ENCODE measurements at regions of chr11 and their contacts with region 1.

Region 1: GRCh38 chr11:130861902-130862860 is 54.1 kb downstream of the SNX19 start:
- DNase-seq: peak; percentile 92
- H3K4me3 ChIP-seq: no peak overlapping the region
- H3K27ac ChIP-seq: no peak overlapping the region
- H3K4me1 ChIP-seq: peaks cover 0 to 7% (median 2%) of the 10 kb centered on the region in 4 donors
- H3K27me3 ChIP-seq: no peaks in the 10 kb centered on the region
- CTCF ChIP-seq: peak; percentile 99 to 100 (median 100)
- EP300 ChIP-seq: no peak
- POLR2A ChIP-seq: no peak

Region 2: DNA sequence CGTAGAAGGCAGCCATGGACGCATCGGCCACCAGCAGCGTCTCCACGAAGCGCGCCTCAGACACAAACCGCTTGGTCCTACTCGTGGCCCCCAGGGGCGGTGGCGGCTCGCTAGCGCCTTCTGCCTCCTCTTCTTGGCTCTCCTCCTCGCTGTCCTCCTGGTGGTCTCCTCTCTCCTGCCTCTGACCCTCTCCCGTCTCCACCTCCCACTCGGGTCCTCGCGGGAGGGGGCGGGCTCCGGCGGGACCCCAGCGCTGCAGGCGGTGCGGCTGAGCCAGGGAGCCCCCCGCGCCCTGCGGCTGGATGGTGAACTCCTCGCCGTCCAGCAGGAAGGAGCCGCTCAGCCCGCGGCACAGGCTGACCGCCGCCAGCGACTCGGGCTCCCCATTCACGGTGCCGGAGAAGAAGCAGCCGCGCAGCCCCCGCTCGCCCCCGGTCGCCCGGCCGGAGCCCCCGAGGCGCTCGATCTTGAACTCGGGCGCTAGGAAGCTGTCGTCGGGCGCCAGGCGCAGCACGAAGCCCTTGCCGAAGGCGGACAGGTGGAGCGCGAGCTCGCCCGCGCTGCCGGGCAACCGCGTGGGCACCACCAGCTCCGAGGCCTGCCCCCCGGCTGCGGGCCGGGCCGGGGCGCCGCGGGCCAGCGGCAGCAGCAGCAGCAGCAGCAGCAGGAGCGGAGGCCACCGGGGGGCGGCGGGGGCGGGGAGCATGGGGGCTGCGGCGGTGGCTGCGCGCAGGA is 434.4 kb before region 1 on chr11:
- in situ Hi-C with region 1: loop called in 2 of 4 experiments (anchors 5 to 10 kb)
- intact Hi-C with region 1: no loop called
- DNase-seq: peak; percentile 25
- H3K4me3 ChIP-seq: peak overlapping the region; percentile 31 to 57 (median 44)
- H3K27ac ChIP-seq: peak overlapping the region in 3 of 4 donors; percentile 55 to 72 (median 61)
- H3K4me1 ChIP-seq: peaks cover 0 to 16% (median 5%) of the 10 kb centered on the region in 4 donors
- H3K27me3 ChIP-seq: peaks cover 51% of the 10 kb centered on the region
- CTCF ChIP-seq: peak in 3 of 5 experiments; percentile 21 to 41 (median 33)
- EP300 ChIP-seq: no peak
- POLR2A ChIP-seq: no peak

Region 3: DNA sequence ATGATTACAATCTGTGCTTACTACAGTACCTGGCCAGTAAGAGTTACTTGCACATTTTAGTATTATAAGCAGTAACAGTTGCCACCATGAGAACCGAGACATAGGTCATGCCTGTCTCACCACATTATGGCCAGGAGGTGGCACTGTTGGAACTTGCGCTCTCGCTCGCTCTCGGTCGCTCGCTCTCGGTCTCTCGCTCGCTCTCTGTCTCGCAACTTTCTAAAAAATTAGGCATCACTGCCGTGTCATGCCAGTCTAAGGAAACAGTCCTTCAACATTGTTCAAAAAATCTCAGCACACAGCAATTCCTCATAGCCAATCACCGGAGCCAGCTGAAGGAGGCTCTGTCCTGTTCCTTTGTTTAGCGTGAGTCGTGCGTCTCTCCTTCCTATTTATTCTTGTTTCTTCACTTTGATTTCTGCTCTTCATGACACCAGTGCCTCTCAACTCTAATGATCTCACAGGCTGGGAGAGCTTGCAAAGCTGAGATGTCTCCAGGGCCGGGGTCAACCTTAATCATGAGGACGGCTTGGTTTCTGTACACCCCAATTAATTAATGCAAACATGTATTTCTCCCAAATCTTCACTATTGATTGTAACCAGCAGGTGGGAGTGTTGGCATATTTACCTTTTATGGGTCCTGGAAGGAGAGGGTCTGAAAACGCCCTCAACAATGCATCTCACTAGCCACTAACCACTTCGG is 427.5 kb before region 1 on chr11:
- in situ Hi-C with region 1: loop called (anchors 5 to 10 kb)
- intact Hi-C with region 1: loop called (anchors 1 kb)
- DNase-seq: peak; percentile 74
- H3K4me3 ChIP-seq: peak overlapping the region; percentile 31 to 56 (median 46)
- H3K27ac ChIP-seq: peak overlapping the region; percentile 39 to 80 (median 74)
- H3K4me1 ChIP-seq: peaks cover 5 to 10% (median 7%) of the 10 kb centered on the region in 4 donors
- H3K27me3 ChIP-seq: peaks cover 13% of the 10 kb centered on the region
- CTCF ChIP-seq: peak; percentile 64 to 94 (median 73)
- EP300 ChIP-seq: no peak
- POLR2A ChIP-seq: no peak

Region 4: GRCh38 chr11:130636722-130637517 is 225.3 kb before region 1 on chr11:
- in situ Hi-C with region 1: no loop called
- intact Hi-C with region 1: loop called (anchors 10 kb)
- DNase-seq: no peak
- H3K4me3 ChIP-seq: no peak overlapping the region
- H3K27ac ChIP-seq: peak overlapping the region in 2 of 4 donors; percentile 8 to 21
- H3K4me1 ChIP-seq: peaks cover 0 to 14% (median 1%) of the 10 kb centered on the region in 4 donors
- H3K27me3 ChIP-seq: no peaks in the 10 kb centered on the region
- CTCF ChIP-seq: no peak
- EP300 ChIP-seq: no peak
- POLR2A ChIP-seq: no peak

Region 5: GRCh38 chr11:130894322-130895025 is 32.3 kb after region 1 on chr11:
- in situ Hi-C with region 1: no loop called
- intact Hi-C with region 1: loop called (anchors 1 kb)
- DNase-seq: peak; percentile 74
- H3K4me3 ChIP-seq: no peak overlapping the region
- H3K27ac ChIP-seq: peak overlapping the region; percentile 17 to 90 (median 81)
- H3K4me1 ChIP-seq: peaks cover 6 to 30% (median 17%) of the 10 kb centered on the region in 4 donors
- H3K27me3 ChIP-seq: no peaks in the 10 kb centered on the region
- CTCF ChIP-seq: peak; percentile 79 to 90 (median 86)
- EP300 ChIP-seq: no peak
- POLR2A ChIP-seq: no peak

Region 6: DNA sequence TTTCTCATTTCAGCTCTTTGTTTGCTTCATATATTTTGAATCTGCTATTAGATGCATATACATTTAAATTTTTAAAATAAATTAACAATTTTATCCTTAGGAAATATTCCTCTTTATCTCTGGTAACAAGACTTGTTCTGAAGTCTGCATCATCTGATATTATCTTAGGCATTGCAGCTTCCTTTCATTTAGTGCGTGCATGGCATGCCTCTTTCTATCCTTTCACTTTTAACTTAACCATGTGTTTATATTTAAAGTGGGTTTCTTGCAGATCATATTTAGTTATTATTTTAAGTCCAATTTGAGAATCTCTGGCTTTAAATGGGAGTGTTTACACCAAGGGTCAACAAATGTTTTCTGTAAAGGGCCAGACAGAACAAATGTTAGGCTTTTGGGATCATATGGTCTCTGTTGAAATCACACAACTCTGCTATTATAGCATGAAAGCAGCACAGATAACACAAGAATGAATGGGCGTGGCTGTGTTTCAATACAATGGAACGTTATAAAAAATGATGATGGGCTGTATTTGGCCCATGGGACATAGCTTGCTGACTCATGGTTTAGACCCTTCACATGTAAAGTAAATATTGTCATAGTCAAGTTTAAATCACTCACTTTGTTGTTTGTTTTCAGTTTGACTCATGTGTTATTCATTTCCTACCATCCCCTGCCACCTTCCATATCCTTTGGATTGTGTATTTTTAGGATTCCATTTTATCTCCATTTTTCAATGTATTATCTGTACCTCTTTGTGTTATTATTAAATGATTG is 138.0 kb after region 1 on chr11:
- in situ Hi-C with region 1: no loop called
- intact Hi-C with region 1: no loop called
- DNase-seq: no peak
- H3K4me3 ChIP-seq: no peak overlapping the region
- H3K27ac ChIP-seq: no peak overlapping the region
- H3K4me1 ChIP-seq: no peaks in the 10 kb centered on the region
- H3K27me3 ChIP-seq: no peaks in the 10 kb centered on the region
- CTCF ChIP-seq: no peak
- EP300 ChIP-seq: no peak
- POLR2A ChIP-seq: no peak